ENCODE measurements at regions of chr6 and their contacts with region 1.

Region 1: GRCh38 chr6:98947351-98948292 is at the start of gene FBXL4:
- H3K4me3 Mint-ChIP-seq: peak within 1 kb of the TSS; percentile 91
- H3K27ac Mint-ChIP-seq: peak within 1 kb of the TSS; percentile 97
- H3K4me1 Mint-ChIP-seq: peaks cover 17% of the 10 kb centered on the region
- H3K27me3 Mint-ChIP-seq: no peaks in the 10 kb centered on the region

Region 2: DNA sequence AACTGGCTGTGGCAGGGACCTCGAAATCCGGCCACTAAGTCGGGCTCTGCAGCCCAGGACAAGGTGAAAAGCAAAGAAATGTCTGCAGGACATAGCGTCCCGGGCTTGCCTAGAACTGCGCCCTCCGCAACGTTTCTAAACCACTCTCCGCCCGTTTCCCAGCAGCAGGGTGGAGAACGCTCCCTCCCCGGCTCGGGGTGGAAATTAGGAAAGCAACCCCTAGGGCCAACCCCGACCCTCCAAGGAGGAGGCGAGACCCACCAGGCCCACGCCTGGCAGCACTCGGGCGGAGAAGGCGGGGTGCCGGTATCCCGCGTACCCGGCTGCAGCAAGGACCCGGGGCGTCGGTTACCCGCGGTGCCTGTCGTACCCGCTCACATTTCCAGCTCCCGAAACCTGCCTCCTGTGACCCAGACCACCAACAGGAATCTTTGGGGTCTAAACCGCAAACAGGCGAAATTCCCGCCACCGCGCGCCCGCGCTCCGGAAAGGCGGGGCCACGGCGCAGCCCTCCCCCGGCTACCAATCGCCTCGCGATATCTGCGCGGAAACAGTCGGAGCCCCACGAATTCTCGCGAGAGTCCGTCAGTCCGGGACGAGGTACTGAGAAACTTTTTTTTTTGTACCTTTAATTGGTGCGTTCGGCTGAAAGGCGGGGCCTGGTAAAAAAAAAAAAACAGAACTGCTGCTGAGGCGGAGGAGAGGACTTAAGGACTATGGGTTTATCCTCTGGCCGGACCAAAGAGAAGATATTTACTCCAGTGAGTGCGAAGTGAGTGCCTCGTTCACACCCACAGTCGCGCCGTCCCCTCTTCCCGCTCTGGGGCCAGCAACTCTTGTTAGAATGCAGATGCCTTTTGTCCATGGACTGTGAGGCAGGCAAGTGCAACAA is 1664.7 kb before region 1 on chr6 and contains the start of gene MMS22L:
- intact Hi-C with region 1: loop called (anchors 10 kb)
- H3K4me3 Mint-ChIP-seq: peak within 1 kb of the TSS; percentile 95
- H3K27ac Mint-ChIP-seq: peak within 1 kb of the TSS; percentile 91
- H3K4me1 Mint-ChIP-seq: no peaks in the 10 kb centered on the region
- H3K27me3 Mint-ChIP-seq: no peaks in the 10 kb centered on the region

Measured in dendritic cell treated with granulocyte-macrophage colony-stimulating factor and Interleukin-4, amounts not matched to agents 40 ng/mL and 50 ng/mL, for 4 days (primary cell).